CD4-positive, alpha-beta T cell (primary cell): ENCODE measurements at regions of chr2 and their contacts with region 1.

Region 1: GRCh38 chr2:26144953-26145680 is 27.8 kb upstream of the GAREM2 start:
- DNase-seq: peak; percentile 31 to 77 (median 50)
- ATAC-seq: peak; percentile 80
- H3K4me3 ChIP-seq: no peak overlapping the region
- H3K4me3 Mint-ChIP-seq: no peak overlapping the region
- H3K27ac ChIP-seq: no peak overlapping the region
- H3K27ac Mint-ChIP-seq: no peak overlapping the region
- H3K4me1 ChIP-seq: no peaks in the 10 kb centered on the region
- H3K4me1 Mint-ChIP-seq: no peaks in the 10 kb centered on the region
- H3K27me3 ChIP-seq: peaks cover 3 to 10% of the 10 kb centered on the region in 2 experiments
- H3K27me3 Mint-ChIP-seq: peaks cover 11% of the 10 kb centered on the region
- CTCF ChIP-seq: peak; percentile 76

Region 2: DNA sequence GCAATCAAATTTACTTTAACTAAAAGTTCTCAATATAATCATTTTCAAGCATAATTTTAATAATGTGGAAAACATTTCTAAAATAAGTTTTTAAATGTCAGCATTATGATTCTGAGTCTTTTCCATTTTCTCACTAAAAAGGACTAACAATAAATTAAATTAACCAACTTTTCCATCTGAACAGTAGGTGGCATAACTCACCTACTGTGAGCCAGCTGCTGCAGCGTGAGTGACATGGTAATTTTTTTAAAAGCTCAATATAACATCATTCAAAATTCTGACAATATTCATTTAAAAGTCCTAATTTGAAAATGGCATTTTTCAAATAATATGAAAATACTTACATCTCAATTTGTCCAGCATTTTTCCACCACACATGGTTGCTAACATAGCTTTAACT is 538.2 kb before region 1 on chr2:
- CTCF ChIA-PET with region 1: no interaction called
- POLR2A ChIA-PET with region 1: no interaction called
- intact Hi-C with region 1: loop called in 1 of 2 experiments (anchors 10 kb)
- DNase-seq: peak in 4 of 14 experiments; percentile 17 to 57 (median 49)
- ATAC-seq: peak; percentile 44
- H3K4me3 ChIP-seq: no peak overlapping the region
- H3K4me3 Mint-ChIP-seq: no peak overlapping the region
- H3K27ac ChIP-seq: no peak overlapping the region
- H3K27ac Mint-ChIP-seq: no peak overlapping the region
- H3K4me1 ChIP-seq: no peaks in the 10 kb centered on the region
- H3K4me1 Mint-ChIP-seq: peaks cover 3% of the 10 kb centered on the region
- H3K27me3 ChIP-seq: no peaks in the 10 kb centered on the region
- H3K27me3 Mint-ChIP-seq: no peaks in the 10 kb centered on the region
- CTCF ChIP-seq: peak; percentile 69

Region 3: DNA sequence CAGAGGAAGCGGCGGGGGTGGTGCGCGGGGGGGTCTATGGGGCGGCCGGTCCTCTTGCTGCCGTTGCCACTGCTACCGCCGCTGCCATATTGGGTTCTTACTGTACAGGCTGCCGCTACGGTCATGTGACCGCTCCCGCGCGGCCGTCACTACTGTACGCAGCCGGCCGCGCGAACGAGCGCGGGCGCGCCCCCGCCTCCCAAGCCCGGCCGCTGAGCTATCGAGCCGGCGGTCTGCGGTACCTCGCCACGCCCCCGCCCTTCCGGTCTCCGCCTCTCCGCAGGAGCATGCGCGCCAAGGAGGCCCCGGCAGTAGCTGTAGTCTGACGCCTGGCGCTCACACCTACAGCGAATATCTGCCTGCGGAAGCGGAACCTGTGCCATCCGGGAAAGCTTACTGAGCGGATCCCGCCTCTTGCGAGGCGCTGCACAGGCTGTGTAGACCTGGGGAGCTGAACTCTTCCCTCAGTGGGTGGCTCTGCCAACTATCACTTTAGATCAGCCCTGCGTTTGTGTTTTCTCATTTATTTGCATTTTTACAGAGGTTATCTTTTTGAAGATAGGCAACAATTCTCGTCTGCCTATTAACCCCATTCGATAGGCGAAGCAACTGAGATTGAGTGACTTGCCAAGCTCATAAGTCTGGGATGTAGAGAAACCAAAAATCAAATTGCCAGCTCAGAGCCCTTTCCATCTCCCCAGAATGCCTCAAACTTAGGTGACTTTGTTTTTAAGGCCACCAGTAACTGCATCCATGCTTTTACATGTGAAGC is 266.6 kb before region 1 on chr2 and contains the start of gene ASXL2:
- CTCF ChIA-PET with region 1: no interaction called
- POLR2A ChIA-PET with region 1: no interaction called
- intact Hi-C with region 1: no loop called
- DNase-seq: peak; percentile 93 to 100 (median 97)
- ATAC-seq: peak; percentile 86
- H3K4me3 ChIP-seq: peak within 1 kb of the TSS; percentile 99
- H3K4me3 Mint-ChIP-seq: peak within 1 kb of the TSS; percentile 93
- H3K27ac ChIP-seq: peak within 1 kb of the TSS; percentile 98 to 99
- H3K27ac Mint-ChIP-seq: peak within 1 kb of the TSS; percentile 93
- H3K4me1 ChIP-seq: peaks cover 15% of the 10 kb centered on the region
- H3K4me1 Mint-ChIP-seq: peaks cover 44% of the 10 kb centered on the region
- H3K27me3 ChIP-seq: no peaks in the 10 kb centered on the region
- H3K27me3 Mint-ChIP-seq: no peaks in the 10 kb centered on the region
- CTCF ChIP-seq: no peak
- total RNA-seq, gene ASXL2: 15.1 to 17.2 TPM

Region 4: GRCh38 chr2:25991965-25992364 is 153.2 kb before region 1 on chr2:
- CTCF ChIA-PET with region 1: interaction called, 11 read pairs
- POLR2A ChIA-PET with region 1: interaction called, 4 read pairs
- intact Hi-C with region 1: loop called (anchors 1 kb)
- DNase-seq: no peak
- ATAC-seq: peak; percentile 13
- H3K4me3 ChIP-seq: no peak overlapping the region
- H3K4me3 Mint-ChIP-seq: no peak overlapping the region
- H3K27ac ChIP-seq: no peak overlapping the region
- H3K27ac Mint-ChIP-seq: peak overlapping the region; percentile 1
- H3K4me1 ChIP-seq: peaks cover 9% of the 10 kb centered on the region
- H3K4me1 Mint-ChIP-seq: peaks cover 8% of the 10 kb centered on the region
- H3K27me3 ChIP-seq: no peaks in the 10 kb centered on the region
- H3K27me3 Mint-ChIP-seq: no peaks in the 10 kb centered on the region
- CTCF ChIP-seq: no peak

Region 5: DNA sequence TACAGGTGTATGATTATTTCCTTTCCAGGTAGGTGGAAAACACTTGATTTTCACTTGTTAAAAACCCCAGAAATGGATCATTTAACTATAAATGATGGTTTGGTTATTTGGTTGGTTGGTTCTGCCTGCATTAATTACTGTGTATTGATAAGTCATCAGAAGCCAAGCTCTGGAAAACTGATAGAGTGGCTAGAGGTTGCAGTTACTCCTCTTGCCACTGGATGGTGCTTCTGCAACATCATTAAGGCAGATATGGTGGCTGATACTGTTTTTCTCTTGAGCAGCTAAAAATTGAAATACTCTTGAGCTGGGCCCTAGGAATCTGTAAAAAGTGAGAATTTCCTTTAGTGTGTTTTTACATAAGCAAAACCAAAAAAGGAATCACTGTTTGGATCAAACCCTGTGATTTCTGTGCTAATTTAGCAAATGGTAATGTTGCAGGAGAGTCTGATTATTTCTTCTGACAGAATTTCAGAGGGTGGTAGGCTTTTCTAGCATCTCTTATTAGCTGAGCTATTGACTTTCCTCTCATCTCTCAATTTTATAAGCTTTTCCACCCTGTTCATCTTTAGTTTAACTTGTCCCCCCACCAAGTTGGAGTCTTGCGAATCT is 57.0 kb before region 1 on chr2:
- CTCF ChIA-PET with region 1: interaction called, 3 read pairs
- POLR2A ChIA-PET with region 1: no interaction called
- intact Hi-C with region 1: loop called (anchors 2 to 5 kb)
- DNase-seq: peak in 5 of 14 experiments; percentile 9 to 61 (median 47)
- ATAC-seq: peak; percentile 86
- H3K4me3 ChIP-seq: no peak overlapping the region
- H3K4me3 Mint-ChIP-seq: no peak overlapping the region
- H3K27ac ChIP-seq: no peak overlapping the region
- H3K27ac Mint-ChIP-seq: no peak overlapping the region
- H3K4me1 ChIP-seq: peaks cover 4% of the 10 kb centered on the region
- H3K4me1 Mint-ChIP-seq: peaks cover 48% of the 10 kb centered on the region
- H3K27me3 ChIP-seq: no peaks in the 10 kb centered on the region
- H3K27me3 Mint-ChIP-seq: no peaks in the 10 kb centered on the region
- CTCF ChIP-seq: peak; percentile 77